Activated naive CD4-positive, alpha-beta T cell treated with anti-CD3 and anti-CD28 coated beads for 36 hours (primary cell): ENCODE measurements at regions of chr7 and their contacts with region 1.

Region 1: GRCh38 chr7:92134271-92135051 is at the start of gene CYP51A1:
- DNase-seq: peak; percentile 93
- H3K4me3 Mint-ChIP-seq: peak within 1 kb of the TSS; percentile 96
- H3K27ac Mint-ChIP-seq: peak within 1 kb of the TSS; percentile 99
- H3K4me1 Mint-ChIP-seq: peaks cover 36% of the 10 kb centered on the region
- H3K27me3 Mint-ChIP-seq: no peaks in the 10 kb centered on the region
- total RNA-seq, gene CYP51A1: 52.8 to 55.5 TPM

Region 2: GRCh38 chr7:90346336-90347125 is 1787.9 kb before region 1 on chr7 and contains the start of gene GTPBP10:
- CTCF ChIA-PET with region 1: no interaction called
- intact Hi-C with region 1: loop called (anchors 1 kb)
- DNase-seq: peak; percentile 96
- H3K4me3 Mint-ChIP-seq: peak within 1 kb of the TSS; percentile 94
- H3K27ac Mint-ChIP-seq: peak within 1 kb of the TSS; percentile 96
- H3K4me1 Mint-ChIP-seq: peaks cover 34% of the 10 kb centered on the region
- H3K27me3 Mint-ChIP-seq: no peaks in the 10 kb centered on the region
- total RNA-seq, gene GTPBP10: 35.8 to 39.3 TPM

Region 3: DNA sequence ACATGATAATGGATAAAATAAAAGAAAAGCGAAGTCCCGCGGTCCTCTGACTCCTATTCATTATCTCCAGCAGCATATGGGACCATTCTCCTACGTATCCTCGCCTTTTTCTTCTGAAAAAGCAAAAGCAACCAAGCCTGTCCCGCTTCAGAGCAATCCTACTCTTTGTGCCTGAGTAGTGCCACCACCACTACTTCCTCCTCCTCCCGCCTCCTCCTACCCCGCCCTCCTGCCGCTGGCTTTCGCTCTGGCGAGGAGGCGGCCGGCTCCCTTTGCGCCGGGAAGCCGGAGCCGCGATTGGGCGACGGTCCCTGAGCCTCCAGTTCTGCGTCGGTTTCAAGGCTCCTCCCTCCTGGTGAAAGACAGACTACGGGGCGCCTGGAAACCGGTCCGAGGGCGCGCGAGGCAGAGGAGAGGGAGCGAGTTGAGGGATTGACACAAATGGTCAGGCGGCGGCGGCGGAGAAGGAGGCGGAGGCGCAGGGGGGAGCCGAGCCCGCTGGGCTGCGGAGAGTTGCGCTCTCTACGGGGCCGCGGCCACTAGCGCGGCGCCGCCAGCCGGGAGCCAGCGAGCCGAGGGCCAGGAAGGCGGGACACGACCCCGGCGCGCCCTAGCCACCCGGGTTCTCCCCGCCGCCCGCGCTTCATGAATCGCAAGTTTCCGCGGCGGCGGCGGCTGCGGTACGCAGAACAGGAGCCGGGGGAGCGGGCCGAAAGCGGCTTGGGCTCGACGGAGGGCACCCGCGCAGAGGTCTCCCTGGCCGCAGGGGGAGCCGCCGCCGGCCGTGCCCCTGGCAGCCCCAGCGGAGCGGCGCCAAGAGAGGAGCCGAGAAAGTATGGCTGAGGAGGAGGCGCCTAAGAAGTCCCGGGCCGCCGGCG is 870.2 kb before region 1 on chr7 and contains the start of gene FZD1:
- CTCF ChIA-PET with region 1: no interaction called
- intact Hi-C with region 1: loop called (anchors 1 kb)
- DNase-seq: peak; percentile 85
- H3K4me3 Mint-ChIP-seq: peak within 1 kb of the TSS; percentile 82
- H3K27ac Mint-ChIP-seq: no peak within 1 kb of the TSS
- H3K4me1 Mint-ChIP-seq: peaks cover 8% of the 10 kb centered on the region
- H3K27me3 Mint-ChIP-seq: peaks cover 53% of the 10 kb centered on the region
- total RNA-seq, gene FZD1: 0.29 to 0.30 TPM

Region 4: DNA sequence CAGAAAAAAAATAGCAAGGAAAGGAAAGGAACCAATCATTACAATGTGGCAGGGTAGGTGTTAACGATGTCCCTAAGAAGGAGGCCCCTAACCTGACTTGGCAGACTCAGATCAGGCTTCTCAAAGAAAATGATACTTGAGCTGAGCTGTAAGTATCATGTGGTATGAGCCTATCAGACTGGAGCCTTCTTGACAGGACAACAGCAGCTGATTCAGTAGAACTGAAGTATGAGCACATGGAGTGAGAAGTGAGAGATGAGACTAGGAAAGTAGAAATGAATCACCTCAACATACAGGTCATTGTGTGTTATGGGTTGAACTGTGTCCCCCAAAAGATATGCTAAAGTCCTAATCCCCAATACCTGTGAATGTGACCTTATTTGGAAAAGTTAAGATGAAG is 320.3 kb before region 1 on chr7:
- CTCF ChIA-PET with region 1: no interaction called
- intact Hi-C with region 1: no loop called
- DNase-seq: no peak
- H3K4me3 Mint-ChIP-seq: no peak overlapping the region
- H3K27ac Mint-ChIP-seq: no peak overlapping the region
- H3K4me1 Mint-ChIP-seq: no peaks in the 10 kb centered on the region
- H3K27me3 Mint-ChIP-seq: no peaks in the 10 kb centered on the region

Region 5: DNA sequence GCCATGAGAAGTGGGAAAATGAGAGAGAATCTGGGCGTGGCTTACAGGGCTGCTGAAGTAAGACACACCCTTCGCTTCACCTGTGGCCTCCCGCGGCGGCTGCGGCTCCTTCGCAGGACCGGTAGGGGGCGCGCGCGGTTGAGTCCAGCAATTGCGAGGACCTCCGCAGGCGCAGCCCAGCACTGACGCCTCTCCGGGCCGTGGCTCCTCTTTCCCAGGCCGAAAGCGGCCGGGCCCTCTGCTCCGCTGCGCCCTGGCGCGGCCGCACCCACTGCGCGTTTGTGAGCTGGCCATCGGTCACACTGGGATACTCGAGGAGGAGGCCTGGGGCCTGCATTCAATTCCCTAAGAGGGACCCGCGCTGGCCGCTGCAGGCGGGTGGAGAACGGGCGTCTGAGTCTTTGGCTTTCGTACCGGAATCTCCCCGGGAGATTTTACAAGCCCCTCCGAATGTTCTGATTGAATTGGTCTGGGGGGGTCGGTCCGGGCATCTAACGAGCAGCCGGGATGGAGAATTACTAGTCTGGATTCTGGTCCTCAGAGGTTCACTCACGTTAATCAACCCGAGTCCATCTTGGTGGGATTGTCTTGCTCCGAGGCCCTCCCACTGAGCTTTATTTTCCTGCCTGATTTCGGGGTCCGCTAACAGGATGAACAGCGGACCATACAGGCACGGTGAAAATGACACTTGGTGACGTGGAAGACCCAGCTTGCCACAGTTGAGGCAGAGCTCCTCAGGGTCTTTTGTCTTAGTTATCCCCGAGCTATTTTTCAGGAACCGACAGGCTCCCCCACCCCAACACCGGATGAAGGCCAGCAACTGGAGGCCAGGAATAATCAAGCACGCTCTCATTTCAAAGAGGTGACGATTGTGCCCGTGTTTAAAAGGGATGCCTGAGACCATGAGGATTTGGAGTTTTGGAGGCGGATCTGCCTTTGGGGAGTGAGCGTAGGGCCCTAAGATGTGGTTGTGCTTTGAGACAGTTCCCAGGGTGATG is 44.8 kb after region 1 on chr7 and contains the start of gene LRRD1:
- CTCF ChIA-PET with region 1: interaction called, 3 read pairs
- intact Hi-C with region 1: loop called (anchors 1 kb)
- DNase-seq: peak; percentile 94
- H3K4me3 Mint-ChIP-seq: peak within 1 kb of the TSS; percentile 72
- H3K27ac Mint-ChIP-seq: no peak within 1 kb of the TSS
- H3K4me1 Mint-ChIP-seq: peaks cover 10% of the 10 kb centered on the region
- H3K27me3 Mint-ChIP-seq: peaks cover 3% of the 10 kb centered on the region
- total RNA-seq, gene LRRD1: not detected

Region 6: DNA sequence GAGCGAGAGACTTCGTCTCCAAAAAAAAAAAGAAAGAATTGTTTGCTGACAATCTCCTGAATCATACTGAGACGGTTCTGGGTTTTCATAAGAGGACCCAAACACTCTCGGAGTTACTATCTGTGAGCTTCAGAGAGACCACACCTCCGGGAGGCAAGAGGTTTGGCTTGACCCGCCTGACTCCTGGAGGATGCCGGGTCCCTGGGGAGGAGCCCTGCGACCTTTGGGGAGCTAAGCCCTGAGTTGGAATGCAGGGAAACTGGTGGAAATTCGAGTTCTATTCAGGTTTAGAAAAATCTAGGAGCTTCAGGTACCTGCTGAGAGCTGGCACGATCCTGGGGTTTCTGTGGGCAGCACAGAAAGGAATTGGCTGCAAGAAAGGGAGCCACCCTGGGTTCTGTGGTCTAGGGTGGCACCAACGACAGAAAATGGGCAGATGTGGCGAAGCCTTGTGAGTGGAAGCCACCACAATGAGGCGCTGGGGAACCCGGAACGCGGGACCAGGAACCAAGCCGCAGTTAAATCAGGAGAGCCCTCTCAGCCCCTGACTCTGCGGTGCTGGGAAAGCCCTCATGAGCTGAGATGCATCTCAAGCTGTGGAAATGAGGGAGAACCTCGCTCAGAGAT is 291.0 kb after region 1 on chr7:
- CTCF ChIA-PET with region 1: interaction called, 3 read pairs
- intact Hi-C with region 1: loop called (anchors 1 kb)
- DNase-seq: peak; percentile 20
- H3K4me3 Mint-ChIP-seq: peak overlapping the region; percentile 19
- H3K27ac Mint-ChIP-seq: no peak overlapping the region
- H3K4me1 Mint-ChIP-seq: peaks cover 11% of the 10 kb centered on the region
- H3K27me3 Mint-ChIP-seq: peaks cover 14% of the 10 kb centered on the region